Lower lobe of right lung (tissue), 2 donors: ENCODE measurements at regions of chr11 and their contacts with region 1.

Region 1: GRCh38 chr11:62905927-62906531 is 15.1 kb downstream of the CHRM1 start:
- DNase-seq: peak; percentile 79
- ATAC-seq: peak; percentile 74 to 80
- H3K4me3 ChIP-seq: no peak overlapping the region
- H3K27ac ChIP-seq: peak overlapping the region; percentile 78
- H3K4me1 ChIP-seq: peaks cover 51% of the 10 kb centered on the region
- H3K27me3 ChIP-seq: no peaks in the 10 kb centered on the region
- CTCF ChIP-seq: peak; percentile 95

Region 2: GRCh38 chr11:62842185-62842741 is 63.8 kb before region 1 on chr11:
- intact Hi-C with region 1: no loop called
- DNase-seq: peak; percentile 54
- ATAC-seq: peak; percentile 0
- H3K4me3 ChIP-seq: peak overlapping the region; percentile 100
- H3K27ac ChIP-seq: peak overlapping the region; percentile 100
- H3K4me1 ChIP-seq: peaks cover 24% of the 10 kb centered on the region
- H3K27me3 ChIP-seq: no peaks in the 10 kb centered on the region
- CTCF ChIP-seq: no peak

Region 3: GRCh38 chr11:63023841-63024648 is 118.0 kb after region 1 on chr11:
- intact Hi-C with region 1: loop called (anchors 5 kb)
- DNase-seq: peak; percentile 91
- ATAC-seq: peak; percentile 94 to 96
- H3K4me3 ChIP-seq: no peak overlapping the region
- H3K27ac ChIP-seq: peak overlapping the region; percentile 37
- H3K4me1 ChIP-seq: no peaks in the 10 kb centered on the region
- H3K27me3 ChIP-seq: peaks cover 5% of the 10 kb centered on the region
- CTCF ChIP-seq: peak; percentile 100

Region 4: DNA sequence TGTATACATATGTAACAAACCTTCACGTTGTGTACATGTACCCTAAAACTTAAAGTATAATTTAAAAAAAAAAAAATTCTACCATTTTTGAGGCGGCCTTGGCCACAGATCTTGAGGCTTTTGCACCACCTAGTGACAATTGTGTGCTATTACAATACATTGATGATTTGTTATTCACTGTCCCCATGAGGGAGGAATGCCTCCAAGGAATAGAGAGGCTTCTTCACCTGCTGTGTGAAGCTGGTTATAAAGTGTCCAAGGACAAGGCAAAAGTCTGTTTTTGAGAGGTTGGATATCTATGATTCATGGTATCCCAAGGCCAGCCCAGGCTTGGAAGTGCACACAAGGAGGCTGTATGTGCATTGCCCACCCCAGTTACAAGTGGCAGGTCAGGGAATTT is 306.7 kb after region 1 on chr11:
- intact Hi-C with region 1: loop called (anchors 10 kb)
- DNase-seq: no peak
- ATAC-seq: no peak
- H3K4me3 ChIP-seq: no peak overlapping the region
- H3K27ac ChIP-seq: no peak overlapping the region
- H3K4me1 ChIP-seq: no peaks in the 10 kb centered on the region
- H3K27me3 ChIP-seq: no peaks in the 10 kb centered on the region
- CTCF ChIP-seq: peak; percentile 52